ENCODE measurements at regions of chr10 and their contacts with region 1.

Region 1: GRCh38 chr10:133378251-133379096 is 588 bp upstream of the PAOX start:
- DNase-seq: peak in 1 of 2 donors; percentile 79
- H3K4me3 ChIP-seq: peak overlapping the region; percentile 87 to 98
- H3K27ac ChIP-seq: peak overlapping the region; percentile 61 to 82
- H3K4me1 ChIP-seq: peaks cover 4 to 13% of the 10 kb centered on the region in 2 donors
- H3K27me3 ChIP-seq: no peaks in the 10 kb centered on the region
- CTCF ChIP-seq: no peak

Region 2: GRCh38 chr10:133261726-133262325 is 116.6 kb before region 1 on chr10:
- intact Hi-C with region 1: loop called (anchors 5 kb)
- DNase-seq: peak in 1 of 2 donors; percentile 90
- H3K4me3 ChIP-seq: peak overlapping the region; percentile 75 to 89
- H3K27ac ChIP-seq: peak overlapping the region; percentile 80 to 85
- H3K4me1 ChIP-seq: peaks cover 14 to 18% of the 10 kb centered on the region in 2 donors
- H3K27me3 ChIP-seq: no peaks in the 10 kb centered on the region
- CTCF ChIP-seq: no peak

Region 3: DNA sequence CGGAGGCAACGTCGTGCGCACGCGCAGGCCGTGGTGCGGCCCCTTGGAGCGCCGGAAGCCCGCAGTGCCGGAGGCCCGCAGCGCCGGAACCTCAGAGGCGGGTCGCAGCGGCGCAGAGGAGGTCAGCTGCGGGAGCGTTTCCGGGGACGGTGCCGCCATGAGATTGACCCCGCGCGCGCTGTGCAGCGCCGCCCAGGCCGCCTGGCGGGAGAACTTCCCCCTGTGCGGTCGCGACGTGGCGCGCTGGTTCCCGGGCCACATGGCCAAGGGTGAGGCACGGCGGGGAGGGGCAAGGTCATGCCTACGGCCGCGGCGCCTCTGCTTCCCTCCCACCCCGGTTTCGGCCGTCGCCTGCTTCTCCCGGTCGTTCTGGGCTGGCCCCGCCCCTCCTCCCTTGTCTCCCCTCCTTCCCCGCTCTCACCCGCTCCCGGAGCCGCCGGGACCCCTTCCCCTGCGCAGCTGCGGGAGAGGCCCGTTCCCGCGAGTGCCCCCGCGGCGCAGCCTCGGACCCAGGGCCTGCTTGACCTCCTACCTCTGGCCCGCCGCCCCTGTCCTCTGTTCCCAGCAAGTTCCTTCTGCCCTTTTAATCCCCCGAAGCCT is 15.7 kb after region 1 on chr10 and contains the start of gene MTG1:
- intact Hi-C with region 1: loop called (anchors 1 kb)
- DNase-seq: peak; percentile 58 to 95
- H3K4me3 ChIP-seq: peak within 1 kb of the TSS; percentile 85 to 97
- H3K27ac ChIP-seq: peak within 1 kb of the TSS; percentile 68 to 82
- H3K4me1 ChIP-seq: peaks cover 0 to 14% of the 10 kb centered on the region in 2 donors
- H3K27me3 ChIP-seq: no peaks in the 10 kb centered on the region
- CTCF ChIP-seq: peak in 2 of 3 experiments; percentile 22 to 30
- total RNA-seq, gene MTG1: 37.8 TPM

Measured in ascending aorta (tissue), 2 donors.